ENCODE measurements at regions of chr1 and their contacts with region 1.

Region 1: DNA sequence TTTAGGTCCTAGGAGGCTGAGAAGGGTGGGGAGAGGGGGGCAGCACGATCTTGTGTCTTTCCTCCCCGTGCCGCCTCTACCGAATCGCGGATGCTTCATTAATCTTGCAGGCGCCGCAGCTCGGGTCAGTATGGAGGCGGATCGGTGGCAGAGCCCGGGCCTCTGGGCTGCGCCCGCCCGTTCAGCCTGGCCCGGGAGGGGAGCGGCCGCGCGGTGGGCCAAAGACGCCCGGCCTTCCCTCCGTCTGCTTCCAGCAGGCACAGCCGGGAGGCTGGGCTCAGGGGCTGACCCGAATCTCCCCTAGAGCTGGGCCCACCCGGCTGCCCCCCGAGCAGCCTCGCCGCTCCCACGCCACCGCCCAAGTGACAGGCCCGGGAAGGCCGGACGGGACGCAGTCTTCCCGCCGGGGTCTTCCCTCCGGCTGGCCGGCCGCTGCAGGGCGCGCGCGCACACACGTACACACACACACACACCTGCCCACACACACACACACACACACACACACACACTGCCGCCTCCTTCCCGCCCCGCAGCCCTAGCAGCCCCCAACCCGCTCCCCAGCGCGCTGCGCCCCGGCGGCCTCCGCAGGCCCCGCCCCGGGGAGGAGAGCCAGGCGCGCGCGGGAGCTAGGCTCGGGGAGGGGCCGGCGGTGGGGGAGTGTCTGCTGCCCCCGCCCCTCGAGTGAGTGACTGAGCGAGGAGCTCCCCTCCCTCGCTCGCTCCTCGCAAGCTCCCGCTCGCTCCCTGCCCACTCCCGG is at the start of gene C1orf21:
- DNase-seq: peak; percentile 65 to 98 (median 88)

Region 2: DNA sequence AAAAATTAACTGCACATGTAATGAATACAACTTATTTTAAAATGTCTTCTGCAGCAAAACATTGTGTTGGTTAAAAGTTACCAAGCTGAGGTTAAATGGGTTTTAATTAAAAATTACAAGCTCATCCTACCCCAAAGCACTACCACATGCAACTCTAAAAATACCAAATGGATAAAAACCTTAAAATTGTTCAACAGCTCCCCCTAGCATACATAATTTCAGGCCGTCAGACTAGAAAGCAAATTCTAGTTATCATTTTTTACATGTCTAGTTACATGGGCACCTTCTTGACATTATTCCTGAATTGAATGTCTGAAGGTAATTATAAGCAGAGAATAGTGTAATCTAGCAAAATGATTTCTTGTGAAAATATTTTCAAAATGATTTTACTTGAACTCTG is 176.8 kb after region 1 on chr1:
- intact Hi-C with region 1: loop called (anchors 10 kb)
- DNase-seq: no peak

Region 3: DNA sequence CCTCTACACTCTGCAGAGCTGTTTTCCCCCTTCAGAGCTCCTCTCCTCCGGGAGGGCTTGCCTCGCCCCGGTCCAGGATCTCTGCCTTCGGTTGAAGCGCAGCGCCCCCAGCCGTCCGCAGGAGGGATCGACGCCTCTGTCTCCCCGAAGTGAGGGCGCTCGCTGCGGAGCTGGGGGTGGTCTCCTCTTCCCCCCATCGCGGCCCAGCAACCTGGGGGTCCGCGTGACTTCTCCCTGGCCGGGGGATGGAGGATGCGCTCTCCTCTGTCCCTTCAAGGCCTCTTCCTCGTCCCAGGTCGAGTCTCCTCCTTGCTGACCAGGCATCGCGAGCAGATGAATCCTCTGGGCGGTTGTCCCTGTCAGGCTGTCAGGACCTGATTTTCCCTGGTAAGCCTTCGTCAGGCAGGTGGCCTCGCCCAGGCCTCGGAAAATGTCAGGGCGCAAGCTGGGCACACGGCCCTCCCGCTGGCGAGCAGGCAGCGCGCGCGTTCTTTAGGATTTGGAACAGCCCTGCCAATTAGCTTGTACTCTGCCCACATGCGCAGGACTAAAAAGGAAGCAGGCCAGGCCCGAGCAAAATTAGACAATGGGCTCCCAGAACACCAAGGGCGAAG is 277.7 kb after region 1 on chr1:
- intact Hi-C with region 1: loop called (anchors 5 kb)
- DNase-seq: peak; percentile 72 to 97 (median 85)